A673 (cell line): ENCODE measurements at regions of chr2 and their contacts with region 1.

Region 1: DNA sequence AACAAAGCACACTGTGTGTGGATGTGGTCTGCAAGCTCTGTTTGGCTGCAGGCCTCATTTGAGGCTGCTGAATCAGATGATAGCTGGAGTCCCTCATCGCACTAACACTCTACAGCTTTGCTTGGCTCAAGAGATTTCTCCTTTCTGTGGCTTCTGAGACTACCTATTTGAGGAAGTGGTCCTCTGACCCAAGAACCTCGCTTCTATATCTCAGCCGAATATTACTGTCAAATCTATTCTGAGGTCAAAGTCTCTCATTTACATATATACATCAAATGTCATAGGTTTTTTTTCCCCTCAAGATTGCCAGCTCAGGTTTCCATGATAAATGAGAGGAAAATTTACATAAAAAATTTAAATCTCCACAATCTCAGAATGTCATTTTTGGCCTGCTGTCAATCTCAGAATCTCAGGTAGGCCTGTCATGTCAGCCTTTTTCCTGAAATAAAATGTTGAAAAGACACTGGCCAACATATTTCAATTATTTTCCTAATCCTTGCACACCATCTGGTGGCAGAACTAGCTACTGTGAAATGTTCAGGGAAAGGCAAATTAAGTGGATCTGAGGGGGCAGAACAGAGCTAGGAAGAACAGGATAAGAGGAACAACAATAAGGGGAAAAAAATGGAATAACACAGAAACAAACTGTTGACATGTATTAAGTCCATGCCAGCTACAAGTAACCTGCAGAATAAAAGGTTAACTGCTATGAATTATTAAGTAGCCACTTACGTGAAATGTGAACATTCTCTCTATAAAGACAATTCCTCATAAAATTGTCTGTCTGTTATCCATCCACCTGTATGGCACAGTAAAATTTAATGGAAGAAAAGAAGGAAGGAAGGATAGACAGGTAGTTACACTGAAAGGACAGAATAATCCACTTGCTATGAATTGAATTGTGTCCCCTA is 39.3 kb downstream of the AP1S3 start:
- DNase-seq: peak; percentile 81
- H3K4me3 ChIP-seq: no peak overlapping the region
- H3K27ac ChIP-seq: no peak overlapping the region
- H3K4me1 ChIP-seq: peaks cover 11% of the 10 kb centered on the region
- H3K27me3 ChIP-seq: no peaks in the 10 kb centered on the region
- CTCF ChIP-seq: peak; percentile 85

Region 2: DNA sequence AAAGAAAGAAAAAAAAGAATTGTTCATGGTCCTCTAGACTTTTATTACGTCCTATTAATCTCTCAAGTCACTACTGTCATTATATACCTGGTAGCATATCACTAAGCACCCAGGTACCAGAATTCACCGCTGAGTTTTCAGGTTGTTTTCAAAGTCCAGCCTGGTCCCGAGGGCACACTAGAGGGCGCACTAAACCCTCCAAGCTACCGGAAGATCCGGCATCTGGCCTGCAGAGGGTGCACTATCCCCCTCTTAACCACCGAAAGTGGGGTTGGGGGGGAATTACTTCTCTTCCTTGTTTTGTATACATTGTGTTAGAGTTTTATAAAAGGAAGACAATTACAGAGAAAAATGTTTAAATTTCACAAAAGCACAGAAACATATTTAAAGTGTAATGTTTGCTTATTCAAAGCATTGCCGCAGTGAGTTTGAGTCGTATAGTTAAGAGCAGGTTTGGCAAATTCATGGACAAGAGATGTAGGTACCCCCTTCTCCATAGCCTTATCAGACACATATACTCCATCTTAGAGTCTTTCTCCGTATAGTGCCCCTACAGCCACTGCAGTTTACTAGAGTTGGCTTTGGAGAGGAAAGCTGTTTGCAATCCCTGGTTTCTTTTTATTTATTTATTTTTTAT is 1107.4 kb before region 1 on chr2:
- CTCF ChIA-PET with region 1: no interaction called
- POLR2A ChIA-PET with region 1: no interaction called
- intact Hi-C with region 1: loop called (anchors 10 kb)
- DNase-seq: peak; percentile 89
- H3K4me3 ChIP-seq: no peak overlapping the region
- H3K27ac ChIP-seq: no peak overlapping the region
- H3K4me1 ChIP-seq: peaks cover 15% of the 10 kb centered on the region
- H3K27me3 ChIP-seq: no peaks in the 10 kb centered on the region
- CTCF ChIP-seq: peak; percentile 100

Region 3: DNA sequence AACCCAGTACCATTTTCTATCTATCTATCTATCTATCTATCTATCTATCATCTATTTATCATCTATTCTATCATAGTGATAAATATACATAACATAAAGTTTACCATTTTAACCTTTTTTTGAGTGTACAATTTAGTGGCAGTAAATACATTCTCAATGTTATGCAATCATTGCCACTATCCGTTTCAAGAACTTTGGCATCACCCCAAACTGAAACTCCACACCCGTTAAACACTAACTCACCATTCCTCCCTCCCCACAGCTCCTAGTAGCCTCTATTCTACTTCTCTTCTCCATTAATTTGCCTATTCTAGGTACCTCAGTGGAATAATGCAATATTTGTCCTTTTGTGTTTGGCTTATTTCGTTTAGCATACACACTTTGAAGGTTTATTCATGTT is 828.6 kb before region 1 on chr2:
- CTCF ChIA-PET with region 1: interaction called, 13 read pairs
- POLR2A ChIA-PET with region 1: no interaction called
- intact Hi-C with region 1: loop called (anchors 1 kb)
- DNase-seq: peak; percentile 54
- H3K4me3 ChIP-seq: no peak overlapping the region
- H3K27ac ChIP-seq: no peak overlapping the region
- H3K4me1 ChIP-seq: peaks cover 30% of the 10 kb centered on the region
- H3K27me3 ChIP-seq: no peaks in the 10 kb centered on the region
- CTCF ChIP-seq: no peak

Region 4: GRCh38 chr2:223238301-223238700 is 559.8 kb before region 1 on chr2:
- CTCF ChIA-PET with region 1: no interaction called
- POLR2A ChIA-PET with region 1: no interaction called
- intact Hi-C with region 1: no loop called
- DNase-seq: no peak
- H3K4me3 ChIP-seq: no peak overlapping the region
- H3K27ac ChIP-seq: no peak overlapping the region
- H3K4me1 ChIP-seq: peaks cover 3% of the 10 kb centered on the region
- H3K27me3 ChIP-seq: no peaks in the 10 kb centered on the region
- CTCF ChIP-seq: no peak

Region 5: GRCh38 chr2:223414646-223415045 is 383.4 kb before region 1 on chr2:
- CTCF ChIA-PET with region 1: no interaction called
- POLR2A ChIA-PET with region 1: no interaction called
- intact Hi-C with region 1: no loop called
- DNase-seq: no peak
- H3K4me3 ChIP-seq: no peak overlapping the region
- H3K27ac ChIP-seq: no peak overlapping the region
- H3K4me1 ChIP-seq: peaks cover 10% of the 10 kb centered on the region
- H3K27me3 ChIP-seq: no peaks in the 10 kb centered on the region
- CTCF ChIP-seq: no peak

Region 6: DNA sequence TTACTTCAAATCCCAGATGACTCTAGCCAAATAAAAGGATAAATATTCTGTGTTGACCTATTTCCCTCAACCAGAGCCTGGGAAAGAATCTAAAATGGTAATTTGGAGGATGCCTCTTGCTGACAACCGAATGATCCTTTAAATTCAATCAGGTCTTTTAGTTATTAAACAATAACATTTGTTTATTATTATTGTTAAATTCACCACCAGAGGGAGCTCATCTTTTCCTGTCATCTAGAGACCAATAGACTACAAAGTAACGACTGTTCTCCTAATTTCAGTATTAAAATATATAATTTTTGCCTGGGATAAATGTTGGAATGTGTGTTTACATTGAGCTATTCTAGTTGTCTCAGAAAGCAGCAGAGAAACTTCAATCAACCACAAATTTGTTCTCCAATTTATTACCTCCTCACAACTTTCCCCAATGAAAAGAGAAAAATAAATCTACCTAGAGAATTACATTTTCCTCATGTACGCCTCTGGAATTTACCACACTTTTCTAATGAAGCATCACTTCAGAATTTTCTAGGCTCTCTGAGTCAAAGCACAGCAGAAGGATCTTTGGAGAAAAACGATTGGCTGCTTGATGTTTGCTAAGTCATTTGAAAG is 338.6 kb before region 1 on chr2:
- CTCF ChIA-PET with region 1: no interaction called
- POLR2A ChIA-PET with region 1: no interaction called
- intact Hi-C with region 1: loop called (anchors 5 kb)
- DNase-seq: peak; percentile 59
- H3K4me3 ChIP-seq: no peak overlapping the region
- H3K27ac ChIP-seq: no peak overlapping the region
- H3K4me1 ChIP-seq: peaks cover 11% of the 10 kb centered on the region
- H3K27me3 ChIP-seq: no peaks in the 10 kb centered on the region
- CTCF ChIP-seq: peak; percentile 65

Region 7: DNA sequence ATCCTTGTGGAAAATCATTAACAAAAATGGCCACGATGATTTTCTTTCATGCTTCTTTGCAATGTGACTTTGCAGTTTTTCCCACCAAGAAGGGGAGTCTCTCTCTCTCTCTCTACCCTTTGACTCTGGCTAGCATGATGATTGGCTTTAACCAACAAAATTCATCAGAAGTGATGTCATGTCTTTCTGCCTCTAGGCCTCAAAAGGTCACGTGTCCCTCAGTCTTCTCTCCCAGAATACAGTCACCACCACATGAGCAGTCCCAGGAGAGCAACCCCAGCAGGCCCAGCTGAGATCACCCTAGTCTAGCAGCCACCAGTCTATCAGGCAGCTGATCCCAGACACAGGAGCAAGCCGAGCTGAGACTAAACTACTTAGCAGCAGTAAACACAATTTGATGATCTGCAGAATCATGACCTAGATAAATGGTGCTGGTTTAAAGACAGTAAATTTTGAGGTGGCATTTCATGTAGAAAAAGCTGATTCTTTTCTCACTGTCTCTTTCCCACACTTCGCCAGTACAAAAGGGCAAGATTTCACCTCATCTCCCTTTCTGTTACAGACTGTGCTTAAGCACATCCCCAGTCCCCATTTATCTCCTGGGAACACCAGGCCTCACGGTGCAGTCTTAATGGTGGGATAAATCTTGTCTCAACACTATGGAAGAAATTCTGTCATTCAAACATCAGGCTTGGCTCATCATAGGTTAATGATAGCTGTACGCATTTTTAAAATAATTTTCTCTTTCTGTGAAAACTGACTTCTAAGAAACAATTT is 328.6 kb before region 1 on chr2:
- CTCF ChIA-PET with region 1: no interaction called
- POLR2A ChIA-PET with region 1: no interaction called
- intact Hi-C with region 1: no loop called
- DNase-seq: peak; percentile 24
- H3K4me3 ChIP-seq: no peak overlapping the region
- H3K27ac ChIP-seq: no peak overlapping the region
- H3K4me1 ChIP-seq: peaks cover 3% of the 10 kb centered on the region
- H3K27me3 ChIP-seq: no peaks in the 10 kb centered on the region
- CTCF ChIP-seq: no peak

Region 8: DNA sequence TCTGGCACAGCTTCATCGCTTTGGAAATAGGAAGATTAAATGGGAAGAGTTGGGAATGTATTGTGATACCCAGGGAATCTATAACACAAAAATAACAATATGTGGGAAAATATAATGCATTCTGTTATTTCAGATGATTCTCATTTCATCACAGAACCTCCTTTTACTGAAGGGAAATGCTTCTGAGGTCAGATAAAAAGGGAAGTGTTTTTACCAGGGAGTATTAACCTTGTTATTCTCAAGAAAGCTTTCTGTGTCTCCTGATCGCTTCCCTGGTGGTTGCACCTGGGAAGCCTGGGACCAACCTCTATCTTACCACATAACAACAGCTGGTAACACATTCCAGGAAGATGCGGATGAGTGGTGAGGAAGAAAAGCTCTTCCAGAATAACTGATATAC is 243.1 kb before region 1 on chr2:
- CTCF ChIA-PET with region 1: no interaction called
- POLR2A ChIA-PET with region 1: no interaction called
- intact Hi-C with region 1: no loop called
- DNase-seq: no peak
- H3K4me3 ChIP-seq: no peak overlapping the region
- H3K27ac ChIP-seq: no peak overlapping the region
- H3K4me1 ChIP-seq: peaks cover 4% of the 10 kb centered on the region
- H3K27me3 ChIP-seq: no peaks in the 10 kb centered on the region
- CTCF ChIP-seq: no peak

Region 9: GRCh38 chr2:223727562-223727961 is 70.5 kb before region 1 on chr2:
- CTCF ChIA-PET with region 1: no interaction called
- POLR2A ChIA-PET with region 1: no interaction called
- intact Hi-C with region 1: loop called (anchors 1 kb)
- DNase-seq: peak; percentile 90
- H3K4me3 ChIP-seq: no peak overlapping the region
- H3K27ac ChIP-seq: peak overlapping the region; percentile 56
- H3K4me1 ChIP-seq: peaks cover 64% of the 10 kb centered on the region
- H3K27me3 ChIP-seq: no peaks in the 10 kb centered on the region
- CTCF ChIP-seq: peak; percentile 81